Activated CD4-positive, alpha-beta T cell treated with anti-CD3 and anti-CD28 coated beads, Interleukin-2, amount 10 ng/mL, durations not matched to agents 24 days and 14 days (primary cell): ENCODE measurements at regions of chrX and their contacts with region 1.

Region 1: GRCh38 chrX:78653118-78653822 is 5.9 kb downstream of the RTL3 start:
- DNase-seq: peak; percentile 63
- H3K4me3 Mint-ChIP-seq: peak overlapping the region; percentile 76
- H3K27ac Mint-ChIP-seq: peak overlapping the region; percentile 79
- H3K4me1 Mint-ChIP-seq: peaks cover 19% of the 10 kb centered on the region
- H3K27me3 Mint-ChIP-seq: no peaks in the 10 kb centered on the region

Region 2: GRCh38 chrX:78333521-78333920 is 319.7 kb before region 1 on chrX:
- intact Hi-C with region 1: loop called (anchors 5 kb)
- DNase-seq: peak; percentile 79
- H3K4me3 Mint-ChIP-seq: peak overlapping the region; percentile 44
- H3K27ac Mint-ChIP-seq: peak overlapping the region; percentile 91
- H3K4me1 Mint-ChIP-seq: peaks cover 48% of the 10 kb centered on the region
- H3K27me3 Mint-ChIP-seq: no peaks in the 10 kb centered on the region

Region 3: GRCh38 chrX:78437621-78438020 is 215.6 kb before region 1 on chrX:
- intact Hi-C with region 1: no loop called
- DNase-seq: no peak
- H3K4me3 Mint-ChIP-seq: no peak overlapping the region
- H3K27ac Mint-ChIP-seq: no peak overlapping the region
- H3K4me1 Mint-ChIP-seq: no peaks in the 10 kb centered on the region
- H3K27me3 Mint-ChIP-seq: no peaks in the 10 kb centered on the region

Region 4: DNA sequence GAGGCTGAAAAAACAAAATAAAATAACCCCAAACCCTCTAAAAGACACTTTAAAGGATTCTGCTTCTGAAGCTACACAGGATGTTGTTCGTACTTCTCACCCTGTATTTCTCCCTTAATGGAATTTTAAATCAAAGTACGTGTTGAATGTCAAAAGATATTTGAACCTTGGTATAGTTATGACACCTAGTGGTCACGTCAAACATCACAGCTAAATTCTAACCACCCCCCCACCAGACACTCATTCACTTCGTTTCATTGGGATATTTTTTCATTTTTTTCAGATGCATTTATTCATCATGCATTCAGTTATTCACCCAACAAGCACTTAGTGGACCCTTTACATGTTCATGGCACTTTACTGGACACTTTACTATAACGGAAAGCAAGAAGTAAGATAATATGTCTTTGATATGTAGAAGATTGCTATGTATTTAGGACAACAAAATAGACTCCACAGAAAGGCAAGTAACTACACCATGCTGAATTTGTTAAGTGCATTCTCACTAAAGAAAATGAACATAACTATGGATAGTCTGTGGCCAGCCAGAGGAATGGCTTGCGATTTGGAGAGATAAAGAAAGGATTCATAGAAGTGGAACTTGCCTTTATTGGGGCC is 428.7 kb after region 1 on chrX:
- intact Hi-C with region 1: loop called (anchors 5 kb)
- DNase-seq: peak; percentile 78
- H3K4me3 Mint-ChIP-seq: peak overlapping the region; percentile 78
- H3K27ac Mint-ChIP-seq: peak overlapping the region; percentile 87
- H3K4me1 Mint-ChIP-seq: peaks cover 14% of the 10 kb centered on the region
- H3K27me3 Mint-ChIP-seq: no peaks in the 10 kb centered on the region

Region 5: GRCh38 chrX:79259073-79259689 is 605.9 kb after region 1 on chrX:
- intact Hi-C with region 1: loop called (anchors 5 kb)
- DNase-seq: peak; percentile 89
- H3K4me3 Mint-ChIP-seq: peak overlapping the region; percentile 75
- H3K27ac Mint-ChIP-seq: peak overlapping the region; percentile 93
- H3K4me1 Mint-ChIP-seq: peaks cover 52% of the 10 kb centered on the region
- H3K27me3 Mint-ChIP-seq: no peaks in the 10 kb centered on the region

Region 6: GRCh38 chrX:79361192-79361870 is 708.1 kb after region 1 on chrX:
- intact Hi-C with region 1: loop called (anchors 5 kb)
- DNase-seq: peak; percentile 69
- H3K4me3 Mint-ChIP-seq: peak overlapping the region; percentile 74
- H3K27ac Mint-ChIP-seq: peak overlapping the region; percentile 74
- H3K4me1 Mint-ChIP-seq: peaks cover 23% of the 10 kb centered on the region
- H3K27me3 Mint-ChIP-seq: no peaks in the 10 kb centered on the region